ENCODE measurements at regions of chr4 and their contacts with region 1.

Region 1: DNA sequence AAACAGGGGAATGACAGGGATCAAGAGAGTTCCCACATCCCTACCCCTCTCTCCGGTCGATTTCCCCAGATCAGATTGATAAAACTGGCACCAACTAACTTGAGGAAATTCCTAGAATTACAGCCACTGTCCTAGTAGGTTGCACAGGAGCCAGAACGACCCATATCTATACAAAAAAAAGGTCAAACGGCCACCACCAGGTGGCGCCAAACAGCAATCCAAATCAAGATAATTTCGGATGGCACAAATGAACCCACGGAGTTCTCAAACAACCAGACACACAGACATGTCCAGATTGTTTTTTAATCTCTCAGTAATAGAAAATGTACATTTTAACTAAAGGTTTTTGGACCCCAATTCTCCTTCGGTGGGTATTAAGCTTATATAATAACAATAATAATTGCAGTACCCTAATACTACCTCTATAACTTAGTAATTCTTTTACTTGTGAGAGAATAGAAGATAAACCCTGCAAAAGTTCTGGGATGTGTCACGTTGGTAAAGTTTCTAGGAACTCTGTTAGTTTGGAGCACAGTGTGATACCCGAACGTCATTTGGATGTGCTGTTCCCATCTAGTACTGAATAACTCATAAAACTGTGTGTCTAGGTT is 212.6 kb downstream of the SPOCK3 start:
- DNase-seq: peak; percentile 78
- H3K4me3 Mint-ChIP-seq: no peak overlapping the region
- H3K27ac Mint-ChIP-seq: no peak overlapping the region
- H3K4me1 Mint-ChIP-seq: peaks cover 5% of the 10 kb centered on the region
- H3K27me3 Mint-ChIP-seq: no peaks in the 10 kb centered on the region
- CTCF ChIP-seq: peak; percentile 82

Region 2: GRCh38 chr4:166862032-166862431 is 159.6 kb before region 1 on chr4:
- CTCF ChIA-PET with region 1: no interaction called
- POLR2A ChIA-PET with region 1: no interaction called
- intact Hi-C with region 1: no loop called
- DNase-seq: no peak
- H3K4me3 Mint-ChIP-seq: no peak overlapping the region
- H3K27ac Mint-ChIP-seq: peak overlapping the region; percentile 35
- H3K4me1 Mint-ChIP-seq: peaks cover 8% of the 10 kb centered on the region
- H3K27me3 Mint-ChIP-seq: no peaks in the 10 kb centered on the region
- CTCF ChIP-seq: no peak

Region 3: GRCh38 chr4:166886718-166887117 is 134.9 kb before region 1 on chr4:
- CTCF ChIA-PET with region 1: no interaction called
- POLR2A ChIA-PET with region 1: no interaction called
- intact Hi-C with region 1: no loop called
- DNase-seq: no peak
- H3K4me3 Mint-ChIP-seq: no peak overlapping the region
- H3K27ac Mint-ChIP-seq: no peak overlapping the region
- H3K4me1 Mint-ChIP-seq: peaks cover 6% of the 10 kb centered on the region
- H3K27me3 Mint-ChIP-seq: no peaks in the 10 kb centered on the region
- CTCF ChIP-seq: no peak

Region 4: GRCh38 chr4:167052631-167053091 is 31.0 kb after region 1 on chr4:
- CTCF ChIA-PET with region 1: no interaction called
- POLR2A ChIA-PET with region 1: no interaction called
- intact Hi-C with region 1: no loop called
- DNase-seq: no peak
- H3K4me3 Mint-ChIP-seq: no peak overlapping the region
- H3K27ac Mint-ChIP-seq: no peak overlapping the region
- H3K4me1 Mint-ChIP-seq: no peaks in the 10 kb centered on the region
- H3K27me3 Mint-ChIP-seq: no peaks in the 10 kb centered on the region
- CTCF ChIP-seq: no peak

Region 5: GRCh38 chr4:167290678-167291077 is 269.0 kb after region 1 on chr4:
- CTCF ChIA-PET with region 1: interaction called, 40 read pairs
- POLR2A ChIA-PET with region 1: no interaction called
- intact Hi-C with region 1: loop called (anchors 1 kb)
- DNase-seq: peak; percentile 33
- H3K4me3 Mint-ChIP-seq: no peak overlapping the region
- H3K27ac Mint-ChIP-seq: no peak overlapping the region
- H3K4me1 Mint-ChIP-seq: no peaks in the 10 kb centered on the region
- H3K27me3 Mint-ChIP-seq: no peaks in the 10 kb centered on the region
- CTCF ChIP-seq: peak; percentile 42

Region 6: DNA sequence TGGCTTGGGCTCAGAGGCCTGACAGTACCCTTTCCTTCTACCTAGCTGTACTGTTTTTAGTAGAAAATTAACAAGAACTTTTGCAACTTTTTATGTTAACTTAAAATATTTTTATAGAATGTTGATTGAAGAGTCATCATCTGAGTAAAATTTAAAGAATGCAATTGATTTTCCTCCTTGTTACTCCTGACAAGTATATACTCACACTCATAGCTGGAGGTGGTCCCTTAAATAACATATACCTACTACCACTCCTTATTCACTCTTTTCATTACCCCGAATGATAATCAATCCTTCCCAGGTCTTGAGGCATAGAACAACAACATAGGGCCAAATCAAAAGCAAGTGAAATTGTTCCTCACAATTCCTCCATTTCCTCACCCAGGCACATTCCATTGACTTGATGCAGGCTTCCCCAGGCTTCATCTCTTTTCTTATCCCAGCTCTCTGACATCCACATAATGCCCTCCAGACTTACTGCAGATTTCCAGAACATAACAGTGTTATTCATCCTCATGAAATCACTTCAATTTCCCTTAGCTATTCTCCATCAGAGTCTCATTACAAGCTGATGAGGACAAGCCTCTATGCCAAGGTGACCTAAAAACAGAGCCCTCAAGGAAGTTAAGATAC is 997.5 kb after region 1 on chr4:
- CTCF ChIA-PET with region 1: no interaction called
- POLR2A ChIA-PET with region 1: no interaction called
- intact Hi-C with region 1: loop called (anchors 5 kb)
- DNase-seq: no peak
- H3K4me3 Mint-ChIP-seq: no peak overlapping the region
- H3K27ac Mint-ChIP-seq: no peak overlapping the region
- H3K4me1 Mint-ChIP-seq: peaks cover 5% of the 10 kb centered on the region
- H3K27me3 Mint-ChIP-seq: no peaks in the 10 kb centered on the region
- CTCF ChIP-seq: no peak

Region 7: GRCh38 chr4:168076989-168077725 is 1055.5 kb after region 1 on chr4:
- CTCF ChIA-PET with region 1: interaction called, 4 read pairs
- POLR2A ChIA-PET with region 1: no interaction called
- intact Hi-C with region 1: loop called (anchors 1 kb)
- DNase-seq: peak; percentile 76
- H3K4me3 Mint-ChIP-seq: no peak overlapping the region
- H3K27ac Mint-ChIP-seq: no peak overlapping the region
- H3K4me1 Mint-ChIP-seq: no peaks in the 10 kb centered on the region
- H3K27me3 Mint-ChIP-seq: no peaks in the 10 kb centered on the region
- CTCF ChIP-seq: peak; percentile 94